ENCODE measurements at regions of chr22 and their contacts with region 1.

Region 1: GRCh38 chr22:46150034-46150654 is at the start of gene PPARA:
- DNase-seq: peak; percentile 59
- H3K4me3 ChIP-seq: peak within 1 kb of the TSS; percentile 76 to 85 (median 83)
- H3K27ac ChIP-seq: peak within 1 kb of the TSS; percentile 23
- H3K4me1 ChIP-seq: peaks cover 30% of the 10 kb centered on the region
- H3K27me3 ChIP-seq: no peaks in the 10 kb centered on the region
- CTCF ChIP-seq: no peak
- total RNA-seq, gene PPARA: 10.3 to 15.5 TPM

Region 2: DNA sequence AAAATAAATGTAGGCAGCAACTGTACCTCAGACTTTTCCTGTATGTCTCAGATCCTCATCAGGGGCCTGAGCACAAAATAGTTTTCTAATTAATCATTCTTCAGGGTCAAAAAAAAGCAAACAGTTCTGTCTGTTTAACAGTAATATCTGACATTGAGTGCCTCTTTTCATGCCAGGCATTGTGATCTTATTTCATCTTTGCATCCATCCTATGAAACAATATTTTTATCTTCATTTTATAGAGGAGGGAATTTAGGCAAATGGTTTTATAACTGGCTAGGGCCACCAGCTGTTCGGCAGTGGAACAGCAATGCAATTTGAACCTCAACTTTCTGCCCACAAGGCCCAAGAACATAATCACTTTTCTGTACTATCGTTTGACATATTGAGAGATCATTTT is 318.8 kb before region 1 on chr22:
- CTCF ChIA-PET with region 1: no interaction called
- dilution Hi-C with region 1: loop called (anchors 25 kb)
- in situ Hi-C with region 1: no loop called
- intact Hi-C with region 1: no loop called
- DNase-seq: no peak
- H3K4me3 ChIP-seq: no peak overlapping the region
- H3K27ac ChIP-seq: no peak overlapping the region
- H3K4me1 ChIP-seq: peaks cover 30% of the 10 kb centered on the region
- H3K27me3 ChIP-seq: no peaks in the 10 kb centered on the region
- CTCF ChIP-seq: peak; percentile 15 to 46

Region 3: DNA sequence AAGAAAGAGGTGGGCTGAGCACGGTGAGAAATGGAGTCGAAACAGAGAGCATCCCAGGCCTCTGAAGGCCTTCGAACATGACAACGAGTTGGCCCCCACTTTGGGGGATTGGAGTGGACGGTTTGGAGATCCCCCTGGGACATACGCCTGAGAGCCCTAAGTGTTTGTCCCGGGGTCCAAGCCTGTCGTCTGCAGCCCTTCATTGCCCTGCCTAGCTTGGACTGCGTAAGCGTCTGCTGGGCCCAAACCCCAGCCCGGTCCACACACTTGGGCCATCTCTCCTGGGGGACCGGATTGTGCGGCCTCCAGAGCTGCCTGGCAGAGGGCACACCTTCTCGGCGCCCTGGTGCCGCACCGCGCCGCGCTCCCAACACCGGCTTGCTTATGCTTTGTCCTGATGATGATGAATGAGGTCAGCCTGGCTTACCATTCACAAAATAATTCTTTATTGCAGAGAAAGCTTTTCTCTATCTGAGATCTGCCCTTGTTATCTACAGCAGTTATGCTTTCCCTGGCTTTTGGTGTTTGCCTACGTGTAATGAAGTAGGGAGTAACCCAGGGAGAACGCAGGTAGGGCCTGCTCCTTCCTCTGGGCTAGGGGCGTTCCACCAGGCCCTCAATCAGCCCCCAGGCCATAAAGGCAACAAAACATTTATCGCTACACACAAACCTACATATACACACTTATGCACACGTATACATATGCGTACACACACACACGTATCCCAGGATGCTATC is 85.7 kb before region 1 on chr22:
- CTCF ChIA-PET with region 1: no interaction called
- dilution Hi-C with region 1: loop called (anchors 5 kb)
- in situ Hi-C with region 1: no loop called
- intact Hi-C with region 1: no loop called
- DNase-seq: peak; percentile 63
- H3K4me3 ChIP-seq: peak overlapping the region; percentile 34 to 69 (median 43)
- H3K27ac ChIP-seq: peak overlapping the region; percentile 99
- H3K4me1 ChIP-seq: peaks cover 42% of the 10 kb centered on the region
- H3K27me3 ChIP-seq: no peaks in the 10 kb centered on the region
- CTCF ChIP-seq: no peak

Region 4: GRCh38 chr22:46201059-46201757 is 51.1 kb after region 1 on chr22:
- CTCF ChIA-PET with region 1: no interaction called
- dilution Hi-C with region 1: no loop called
- in situ Hi-C with region 1: no loop called
- intact Hi-C with region 1: no loop called
- DNase-seq: peak; percentile 35
- H3K4me3 ChIP-seq: no peak overlapping the region
- H3K27ac ChIP-seq: no peak overlapping the region
- H3K4me1 ChIP-seq: peaks cover 6% of the 10 kb centered on the region
- H3K27me3 ChIP-seq: no peaks in the 10 kb centered on the region
- CTCF ChIP-seq: no peak

Region 5: DNA sequence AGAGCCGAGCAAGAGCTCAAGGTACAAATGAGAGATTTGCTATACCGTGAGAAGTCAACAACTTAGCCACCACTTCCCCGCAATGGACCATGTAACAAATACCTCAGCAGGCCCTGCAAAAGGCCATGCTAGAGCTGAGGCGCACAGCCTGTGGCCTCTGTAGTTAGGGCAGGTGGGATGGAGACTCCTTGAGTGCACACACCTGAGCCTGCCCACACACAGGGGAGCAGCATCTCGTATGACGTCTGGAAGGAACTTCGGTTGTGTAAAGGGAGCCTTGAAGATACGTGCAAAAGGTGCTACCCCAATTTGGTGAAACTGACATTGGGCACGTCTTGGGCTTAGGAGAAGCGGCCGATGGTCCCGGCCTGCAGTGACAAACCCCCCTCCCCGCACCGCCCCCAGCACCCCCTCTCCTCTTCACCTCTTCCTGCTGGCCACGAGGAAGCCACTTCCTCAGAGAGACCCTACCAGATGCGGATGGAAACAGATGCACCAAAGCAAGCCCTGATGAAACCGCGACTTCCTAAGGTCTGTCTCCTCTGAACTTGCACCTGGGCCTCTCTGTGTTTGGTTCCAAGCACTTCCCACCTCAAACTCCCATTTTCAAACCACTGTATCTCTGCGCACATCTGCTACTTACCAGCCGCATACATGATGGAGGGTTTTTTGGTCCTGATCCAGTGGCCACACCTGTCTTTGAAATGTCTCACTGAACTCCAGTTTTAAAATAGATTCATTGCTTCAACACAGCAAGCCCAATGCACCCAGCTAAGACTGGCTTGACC is 89.3 kb after region 1 on chr22:
- CTCF ChIA-PET with region 1: no interaction called
- dilution Hi-C with region 1: loop called (anchors 5 kb)
- in situ Hi-C with region 1: no loop called
- intact Hi-C with region 1: no loop called
- DNase-seq: no peak
- H3K4me3 ChIP-seq: no peak overlapping the region
- H3K27ac ChIP-seq: no peak overlapping the region
- H3K4me1 ChIP-seq: no peaks in the 10 kb centered on the region
- H3K27me3 ChIP-seq: no peaks in the 10 kb centered on the region
- CTCF ChIP-seq: no peak

Region 6: GRCh38 chr22:46309526-46310085 is 159.5 kb after region 1 on chr22:
- CTCF ChIA-PET with region 1: no interaction called
- dilution Hi-C with region 1: loop called (anchors 5 kb)
- in situ Hi-C with region 1: no loop called
- intact Hi-C with region 1: no loop called
- DNase-seq: no peak
- H3K4me3 ChIP-seq: no peak overlapping the region
- H3K27ac ChIP-seq: no peak overlapping the region
- H3K4me1 ChIP-seq: peaks cover 5% of the 10 kb centered on the region
- H3K27me3 ChIP-seq: no peaks in the 10 kb centered on the region
- CTCF ChIP-seq: no peak

Region 7: GRCh38 chr22:46415776-46416519 is 265.8 kb after region 1 on chr22:
- CTCF ChIA-PET with region 1: no interaction called
- dilution Hi-C with region 1: loop called (anchors 5 kb)
- in situ Hi-C with region 1: no loop called
- intact Hi-C with region 1: no loop called
- DNase-seq: no peak
- H3K4me3 ChIP-seq: no peak overlapping the region
- H3K27ac ChIP-seq: no peak overlapping the region
- H3K4me1 ChIP-seq: no peaks in the 10 kb centered on the region
- H3K27me3 ChIP-seq: no peaks in the 10 kb centered on the region
- CTCF ChIP-seq: no peak

Measured in mammary epithelial cell (primary cell).